ENCODE measurements at regions of chr5 and their contacts with region 1.

Region 1: GRCh38 chr5:66306105-66306843 is 162.2 kb downstream of the SREK1 start:
- DNase-seq: no peak
- ATAC-seq: peak; percentile 65
- H3K4me3 Mint-ChIP-seq: no peak overlapping the region
- H3K27ac Mint-ChIP-seq: no peak overlapping the region
- H3K4me1 Mint-ChIP-seq: no peaks in the 10 kb centered on the region
- H3K27me3 Mint-ChIP-seq: peaks cover 15% of the 10 kb centered on the region
- CTCF ChIP-seq: no peak

Region 2: DNA sequence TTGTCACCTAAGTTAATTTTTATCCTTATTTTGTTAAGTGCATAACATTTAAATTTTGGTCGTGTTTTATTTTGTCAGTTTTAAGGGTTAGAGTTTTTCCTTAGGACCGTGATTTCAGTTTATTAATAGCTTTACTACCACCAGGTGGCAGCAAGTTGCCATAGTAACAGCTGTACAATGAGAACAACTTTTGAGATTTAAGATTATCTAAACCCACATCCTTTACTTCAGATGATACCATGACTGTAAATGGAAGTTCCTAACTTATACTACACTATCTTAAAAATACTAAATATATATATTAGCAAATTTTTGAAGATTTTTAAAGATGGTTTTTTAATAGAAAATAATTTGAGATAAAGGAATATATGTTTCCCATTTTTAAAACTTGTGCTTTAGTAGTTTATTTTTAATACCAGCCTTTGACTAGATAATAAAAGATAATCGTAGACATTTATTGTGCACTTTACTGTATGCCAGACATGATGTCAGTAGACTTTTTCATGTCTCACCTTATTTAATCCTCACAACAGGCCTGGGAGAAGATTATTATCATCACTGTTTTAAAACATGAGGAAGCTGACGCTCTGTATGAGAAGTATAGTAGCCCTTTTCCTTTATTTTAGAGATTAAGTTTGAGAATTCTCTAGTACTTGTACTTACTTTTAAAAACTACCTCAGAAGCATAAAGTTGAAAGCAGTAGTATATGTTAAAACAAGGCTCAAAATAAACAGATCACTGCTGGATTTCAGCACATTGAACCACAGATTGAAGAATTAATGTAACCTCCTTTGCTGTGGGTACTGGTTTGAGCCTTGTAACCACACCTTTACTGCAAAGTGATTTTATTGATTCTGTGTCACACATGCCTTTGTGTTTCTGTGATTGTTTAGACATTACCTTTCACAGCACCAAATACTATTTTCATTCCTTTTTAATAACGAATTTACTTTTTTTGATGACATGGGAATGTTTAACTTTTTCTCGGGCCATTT is 134.6 kb before region 1 on chr5:
- CTCF ChIA-PET with region 1: interaction called, 6 read pairs
- POLR2A ChIA-PET with region 1: no interaction called
- intact Hi-C with region 1: loop called (anchors 1 kb)
- DNase-seq: no peak
- ATAC-seq: peak; percentile 65
- H3K4me3 Mint-ChIP-seq: no peak overlapping the region
- H3K27ac Mint-ChIP-seq: no peak overlapping the region
- H3K4me1 Mint-ChIP-seq: peaks cover 14% of the 10 kb centered on the region
- H3K27me3 Mint-ChIP-seq: no peaks in the 10 kb centered on the region
- CTCF ChIP-seq: no peak

Region 3: GRCh38 chr5:66186108-66186507 is 120.2 kb before region 1 on chr5:
- CTCF ChIA-PET with region 1: no interaction called
- POLR2A ChIA-PET with region 1: no interaction called
- intact Hi-C with region 1: no loop called
- DNase-seq: no peak
- ATAC-seq: no peak
- H3K4me3 Mint-ChIP-seq: no peak overlapping the region
- H3K27ac Mint-ChIP-seq: no peak overlapping the region
- H3K4me1 Mint-ChIP-seq: no peaks in the 10 kb centered on the region
- H3K27me3 Mint-ChIP-seq: no peaks in the 10 kb centered on the region
- CTCF ChIP-seq: no peak

Region 4: DNA sequence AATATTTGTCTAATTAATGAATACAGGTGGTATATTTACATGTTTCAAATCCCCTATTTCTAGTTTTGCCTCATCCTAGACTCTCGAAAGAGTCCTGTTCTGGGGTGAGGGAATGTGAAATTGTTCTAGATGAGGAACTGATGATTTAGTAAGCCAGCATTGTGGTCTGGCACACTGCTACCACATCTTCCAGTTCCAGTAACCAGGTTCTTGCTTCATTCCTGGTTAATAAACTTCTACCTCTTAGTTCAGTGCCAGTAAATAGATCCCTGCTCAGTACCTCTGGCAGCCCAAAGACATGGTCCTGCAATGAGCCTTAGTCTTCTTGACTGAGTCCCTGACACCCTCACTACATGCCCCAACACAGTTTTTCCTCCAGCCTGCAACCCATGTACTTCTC is 45.5 kb after region 1 on chr5:
- CTCF ChIA-PET with region 1: no interaction called
- POLR2A ChIA-PET with region 1: no interaction called
- intact Hi-C with region 1: no loop called
- DNase-seq: no peak
- ATAC-seq: no peak
- H3K4me3 Mint-ChIP-seq: no peak overlapping the region
- H3K27ac Mint-ChIP-seq: no peak overlapping the region
- H3K4me1 Mint-ChIP-seq: no peaks in the 10 kb centered on the region
- H3K27me3 Mint-ChIP-seq: peaks cover 10% of the 10 kb centered on the region
- CTCF ChIP-seq: no peak

Region 5: GRCh38 chr5:66367814-66368541 is 61.7 kb after region 1 on chr5:
- CTCF ChIA-PET with region 1: no interaction called
- POLR2A ChIA-PET with region 1: no interaction called
- intact Hi-C with region 1: no loop called
- DNase-seq: no peak
- ATAC-seq: no peak
- H3K4me3 Mint-ChIP-seq: no peak overlapping the region
- H3K27ac Mint-ChIP-seq: no peak overlapping the region
- H3K4me1 Mint-ChIP-seq: no peaks in the 10 kb centered on the region
- H3K27me3 Mint-ChIP-seq: peaks cover 4% of the 10 kb centered on the region
- CTCF ChIP-seq: no peak

Region 6: GRCh38 chr5:66540078-66540477 is 233.8 kb after region 1 on chr5:
- CTCF ChIA-PET with region 1: no interaction called
- POLR2A ChIA-PET with region 1: no interaction called
- intact Hi-C with region 1: no loop called
- DNase-seq: no peak
- ATAC-seq: peak; percentile 40
- H3K4me3 Mint-ChIP-seq: no peak overlapping the region
- H3K27ac Mint-ChIP-seq: no peak overlapping the region
- H3K4me1 Mint-ChIP-seq: peaks cover 22% of the 10 kb centered on the region
- H3K27me3 Mint-ChIP-seq: no peaks in the 10 kb centered on the region
- CTCF ChIP-seq: no peak

Region 7: DNA sequence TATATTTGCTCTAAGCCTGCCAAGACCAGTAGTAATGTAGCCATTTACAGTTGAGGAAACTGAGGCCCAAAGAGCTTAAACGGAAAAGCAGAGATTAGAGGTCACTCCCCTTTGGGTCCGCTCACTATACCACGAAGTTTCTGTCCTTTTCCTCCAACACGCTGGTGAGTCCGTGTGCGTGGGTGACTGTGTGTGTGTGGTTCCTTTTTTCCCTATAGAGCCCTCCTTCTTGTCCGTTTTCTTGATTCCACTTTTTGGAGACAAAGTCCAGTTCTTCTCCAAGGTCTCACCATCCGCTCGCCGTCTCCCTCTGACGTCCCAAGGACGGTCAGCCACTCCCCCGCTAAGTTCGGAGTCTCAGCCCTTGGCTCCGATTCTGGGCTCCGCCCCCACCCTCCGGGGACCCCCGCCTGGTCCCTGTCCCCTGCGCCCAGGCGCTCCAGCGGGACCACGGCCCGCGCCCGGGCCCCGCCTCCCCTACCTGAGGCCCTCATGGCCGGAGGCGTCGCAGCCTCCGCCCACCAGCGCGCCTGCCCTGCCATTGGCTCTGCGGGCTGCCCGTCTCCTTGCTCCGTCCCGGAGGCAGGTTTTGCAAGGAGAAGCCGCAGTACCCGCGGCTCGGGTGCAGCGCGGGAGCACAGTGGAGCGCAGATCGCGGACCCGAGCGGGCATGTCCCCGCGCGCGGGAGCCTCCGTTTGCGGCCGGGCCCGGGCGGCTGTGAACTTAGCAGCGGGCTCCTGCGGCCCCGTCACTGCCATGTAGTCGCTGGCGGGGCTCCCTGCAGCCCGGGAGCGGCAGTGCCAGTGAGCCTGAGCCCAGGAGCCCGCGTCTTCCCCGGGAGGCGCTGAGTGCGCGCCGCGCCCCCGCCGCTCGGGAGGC is 289.7 kb after region 1 on chr5 and contains the start of gene MAST4:
- CTCF ChIA-PET with region 1: no interaction called
- POLR2A ChIA-PET with region 1: no interaction called
- intact Hi-C with region 1: loop called (anchors 1 kb)
- DNase-seq: peak; percentile 79
- ATAC-seq: peak; percentile 96
- H3K4me3 Mint-ChIP-seq: peak within 1 kb of the TSS; percentile 83
- H3K27ac Mint-ChIP-seq: no peak within 1 kb of the TSS
- H3K4me1 Mint-ChIP-seq: peaks cover 22% of the 10 kb centered on the region
- H3K27me3 Mint-ChIP-seq: peaks cover 32% of the 10 kb centered on the region
- CTCF ChIP-seq: no peak
- total RNA-seq, gene MAST4: 10.3 and 17.2 TPM in 2 replicates

Region 8: DNA sequence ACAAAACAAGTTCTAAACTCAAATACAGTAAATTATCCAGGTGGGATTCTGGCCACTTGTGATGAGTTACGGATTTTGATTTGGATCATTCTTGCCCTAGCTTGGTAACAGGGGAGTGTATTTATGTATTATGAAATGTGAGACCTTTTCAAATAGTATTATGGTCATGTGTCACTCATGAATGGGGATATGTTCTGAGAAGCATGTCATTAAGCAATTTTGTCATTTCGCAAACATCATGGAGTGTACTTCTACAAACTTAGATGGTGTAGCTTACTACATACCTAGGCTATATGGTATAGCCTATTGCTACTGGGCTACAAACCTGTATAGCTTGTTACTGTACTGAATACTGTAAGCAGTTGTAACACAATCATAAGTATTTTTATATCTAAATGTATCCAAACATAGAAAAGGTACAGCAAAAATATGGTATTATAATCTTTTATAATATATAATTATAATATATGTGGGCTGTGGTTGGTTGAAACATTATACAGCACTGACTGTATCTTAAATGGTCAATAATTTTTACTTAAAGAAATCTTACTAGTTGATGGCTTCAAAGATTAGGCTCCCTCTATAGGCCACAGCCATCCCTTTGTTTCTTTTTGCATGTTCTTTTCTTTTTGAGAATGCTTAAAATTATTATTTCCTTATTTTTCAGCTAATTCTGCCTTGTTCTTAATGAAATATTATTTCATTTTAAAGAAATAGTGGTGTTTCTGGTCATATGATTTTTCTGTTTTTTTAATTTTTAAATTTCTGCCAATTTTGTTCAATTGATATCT is 418.3 kb after region 1 on chr5:
- CTCF ChIA-PET with region 1: interaction called, 17 read pairs
- POLR2A ChIA-PET with region 1: no interaction called
- intact Hi-C with region 1: loop called (anchors 1 kb)
- DNase-seq: no peak
- ATAC-seq: no peak
- H3K4me3 Mint-ChIP-seq: no peak overlapping the region
- H3K27ac Mint-ChIP-seq: no peak overlapping the region
- H3K4me1 Mint-ChIP-seq: no peaks in the 10 kb centered on the region
- H3K27me3 Mint-ChIP-seq: no peaks in the 10 kb centered on the region
- CTCF ChIP-seq: no peak

Region 9: DNA sequence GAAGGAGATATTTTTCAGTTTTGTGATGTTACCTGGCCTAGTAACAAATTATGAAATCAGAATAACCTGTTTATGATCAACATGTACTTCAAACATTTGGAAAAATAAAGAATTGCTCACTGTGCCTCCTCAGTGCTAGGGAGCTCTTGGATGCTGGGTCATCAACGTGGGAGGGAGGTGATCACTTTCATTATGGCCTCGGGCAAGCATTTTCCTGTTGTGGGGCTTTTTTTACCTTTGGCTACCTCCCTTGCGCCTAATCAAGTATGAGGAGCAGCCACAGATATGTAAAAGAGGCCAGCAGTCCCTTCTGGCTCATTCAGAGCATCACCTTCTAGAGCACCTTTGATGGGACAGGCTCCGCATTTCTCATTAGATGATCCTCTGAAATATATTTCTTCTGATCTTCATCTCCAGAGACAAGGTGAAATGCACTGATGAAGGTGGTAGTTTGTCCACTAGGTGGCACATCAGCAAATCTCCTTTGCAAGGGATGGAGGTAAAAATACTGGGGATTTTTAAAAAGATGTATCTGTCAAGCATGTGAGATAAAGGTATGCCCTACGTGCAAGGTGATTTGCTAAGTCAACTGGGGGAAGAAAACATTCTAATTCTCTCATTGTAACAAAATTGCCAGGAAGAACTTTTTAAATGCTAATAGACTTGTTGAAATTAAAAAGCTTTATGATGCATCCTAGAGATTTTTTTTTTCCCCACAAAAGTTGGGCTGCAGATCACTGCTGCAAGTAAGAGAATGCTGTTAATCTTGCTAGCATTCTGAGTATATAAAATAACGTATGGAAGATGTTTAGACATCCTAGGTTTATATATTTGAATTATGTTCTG is 508.1 kb after region 1 on chr5:
- CTCF ChIA-PET with region 1: interaction called, 6 read pairs
- POLR2A ChIA-PET with region 1: no interaction called
- intact Hi-C with region 1: loop called (anchors 2 kb)
- DNase-seq: no peak
- ATAC-seq: no peak
- H3K4me3 Mint-ChIP-seq: no peak overlapping the region
- H3K27ac Mint-ChIP-seq: no peak overlapping the region
- H3K4me1 Mint-ChIP-seq: peaks cover 11% of the 10 kb centered on the region
- H3K27me3 Mint-ChIP-seq: peaks cover 5% of the 10 kb centered on the region
- CTCF ChIP-seq: no peak